ENCODE measurements at regions of chr2 and their contacts with region 1.

Region 1: DNA sequence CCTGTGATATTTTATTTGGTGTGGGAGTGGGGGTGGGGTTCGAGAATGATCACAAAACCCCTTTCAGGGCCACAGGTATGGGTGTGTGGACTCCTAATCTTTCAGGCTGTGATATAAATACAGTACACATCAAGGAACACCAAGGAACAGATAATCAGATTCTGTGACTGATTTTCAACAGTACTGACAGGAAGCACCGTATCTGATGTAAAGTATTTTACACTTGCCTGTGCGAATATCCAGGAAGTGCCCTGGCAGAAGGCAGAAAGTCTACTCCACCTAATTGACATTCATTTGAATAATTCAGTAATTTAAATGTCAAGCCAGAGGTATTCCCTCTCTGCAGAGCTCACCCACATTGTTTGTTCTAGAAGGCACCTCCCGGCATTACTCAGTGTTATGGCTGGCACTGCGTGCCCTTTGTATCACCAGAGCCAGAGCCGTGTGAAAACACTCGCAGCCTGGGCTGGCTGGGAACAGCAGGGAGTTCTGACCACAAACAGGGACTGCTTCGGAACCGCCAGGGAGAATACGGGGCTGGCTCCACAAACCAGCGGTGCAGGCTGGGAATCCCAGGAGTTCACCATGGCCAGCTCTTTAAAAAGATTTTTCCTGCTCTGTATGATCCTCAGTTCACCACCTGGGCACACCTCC is 91.8 kb downstream of the ACVR1 start:
- DNase-seq: peak; percentile 85
- ATAC-seq: peak; percentile 99
- H3K4me3 ChIP-seq: peak overlapping the region; percentile 56
- H3K27ac ChIP-seq: peak overlapping the region; percentile 77
- H3K4me1 ChIP-seq: peaks cover 19% of the 10 kb centered on the region
- H3K27me3 ChIP-seq: no peaks in the 10 kb centered on the region
- CTCF ChIP-seq: no peak

Region 2: DNA sequence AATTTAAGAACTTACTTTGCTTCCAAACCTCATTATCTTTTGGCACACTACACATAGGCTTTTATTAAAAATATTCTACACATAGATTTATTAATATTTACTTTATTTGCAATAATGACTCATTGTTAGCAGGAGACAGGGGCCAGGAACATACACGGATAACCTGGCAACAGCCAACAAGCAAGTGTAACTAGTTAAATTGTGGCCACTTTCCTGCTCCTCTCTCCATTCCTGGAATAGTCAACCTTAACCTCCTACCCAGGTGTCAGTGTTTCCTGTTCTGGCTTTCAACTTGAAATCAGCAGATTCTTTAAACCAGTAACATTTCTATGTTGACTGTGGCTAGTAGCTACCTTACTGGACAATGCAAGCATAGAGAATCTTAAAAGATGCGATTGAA is 65.3 kb after region 1 on chr2:
- CTCF ChIA-PET with region 1: no interaction called
- POLR2A ChIA-PET with region 1: no interaction called
- intact Hi-C with region 1: loop called (anchors 2 kb)
- DNase-seq: peak; percentile 91
- ATAC-seq: peak; percentile 99
- H3K4me3 ChIP-seq: no peak overlapping the region
- H3K27ac ChIP-seq: peak overlapping the region; percentile 87
- H3K4me1 ChIP-seq: peaks cover 32% of the 10 kb centered on the region
- H3K27me3 ChIP-seq: no peaks in the 10 kb centered on the region
- CTCF ChIP-seq: no peak

Region 3: GRCh38 chr2:157857881-157858280 is 73.6 kb after region 1 on chr2:
- CTCF ChIA-PET with region 1: no interaction called
- POLR2A ChIA-PET with region 1: no interaction called
- intact Hi-C with region 1: loop called (anchors 1 kb)
- DNase-seq: peak; percentile 91
- ATAC-seq: peak; percentile 84
- H3K4me3 ChIP-seq: no peak overlapping the region
- H3K27ac ChIP-seq: peak overlapping the region; percentile 97
- H3K4me1 ChIP-seq: peaks cover 42% of the 10 kb centered on the region
- H3K27me3 ChIP-seq: no peaks in the 10 kb centered on the region
- CTCF ChIP-seq: no peak